ENCODE measurements at regions of chr16 and their contacts with region 1.

Region 1: GRCh38 chr16:648781-649589 is at the start of gene WDR90:
- DNase-seq: peak; percentile 84 to 88
- ATAC-seq: peak; percentile 85
- H3K4me3 ChIP-seq: peak within 1 kb of the TSS; percentile 61 to 78 (median 65)
- H3K27ac ChIP-seq: peak within 1 kb of the TSS; percentile 87 to 97 (median 96)
- H3K4me1 ChIP-seq: peaks cover 35 to 55% of the 10 kb centered on the region in 2 donors
- H3K27me3 ChIP-seq: no peaks in the 10 kb centered on the region
- CTCF ChIP-seq: no peak
- POLR2A ChIP-seq: peak; percentile 60 to 70
- total RNA-seq, gene WDR90: 2.9 to 9.8 (median 6.5) TPM

Region 2: GRCh38 chr16:234468-235305 is 414.3 kb before region 1 on chr16 and contains the start of gene FAM234A:
- in situ Hi-C with region 1: no loop called
- intact Hi-C with region 1: loop called (anchors 10 kb)
- DNase-seq: peak; percentile 92 to 93
- ATAC-seq: peak; percentile 86 to 87
- H3K4me3 ChIP-seq: peak within 1 kb of the TSS; percentile 89 to 98 (median 96)
- H3K27ac ChIP-seq: peak within 1 kb of the TSS; percentile 99 to 100 (median 100)
- H3K4me1 ChIP-seq: peaks cover 15 to 16% of the 10 kb centered on the region in 2 donors
- H3K27me3 ChIP-seq: no peaks in the 10 kb centered on the region
- CTCF ChIP-seq: peak in 4 of 5 experiments; percentile 37 to 51 (median 48)
- POLR2A ChIP-seq: peak; percentile 99 to 100
- total RNA-seq, gene FAM234A: 85.2 to 288 (median 251) TPM

Region 3: DNA sequence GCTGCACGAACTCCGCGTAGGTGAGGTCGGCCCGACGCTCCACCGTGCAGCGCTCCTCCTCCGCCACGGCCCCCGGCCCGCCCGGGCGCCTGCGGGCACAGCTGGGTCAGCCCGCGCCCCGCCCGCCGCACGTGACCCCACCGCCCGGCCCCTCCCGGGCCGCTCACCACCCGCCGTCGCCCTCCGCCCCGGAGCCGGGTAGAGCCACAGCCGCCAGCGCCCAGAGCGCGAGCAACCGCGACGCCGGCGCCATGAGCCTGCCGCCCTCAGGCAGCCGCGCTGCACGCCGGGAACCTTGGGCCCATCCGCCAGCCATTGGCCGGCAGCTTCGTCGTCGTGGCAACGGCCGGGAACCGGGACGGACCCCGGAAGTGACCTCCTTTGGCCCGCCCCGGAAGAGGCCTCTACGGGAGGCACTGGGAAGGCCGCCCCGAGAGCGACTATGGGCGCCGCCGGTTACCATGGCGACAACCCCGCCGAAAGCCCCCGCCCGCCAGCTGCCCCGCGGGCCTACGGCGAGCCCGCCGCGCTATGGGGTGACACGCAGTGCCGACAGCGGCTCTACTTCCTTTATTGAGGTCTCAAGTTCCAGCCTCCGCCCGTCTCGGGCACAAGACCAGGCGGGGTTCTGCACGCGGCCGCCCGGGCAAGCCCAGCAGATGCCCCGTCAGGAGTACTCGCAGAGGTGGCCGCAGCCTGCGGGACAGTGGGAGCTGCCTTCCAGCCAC is 35.2 kb after region 1 on chr16 and contains the start of gene JMJD8:
- in situ Hi-C with region 1: no loop called
- intact Hi-C with region 1: no loop called
- DNase-seq: peak; percentile 94
- ATAC-seq: peak; percentile 72 to 76
- H3K4me3 ChIP-seq: peak within 1 kb of the TSS; percentile 84 to 87 (median 86)
- H3K27ac ChIP-seq: peak within 1 kb of the TSS; percentile 73 to 87 (median 83)
- H3K4me1 ChIP-seq: peaks cover 35 to 57% of the 10 kb centered on the region in 2 donors
- H3K27me3 ChIP-seq: no peaks in the 10 kb centered on the region
- CTCF ChIP-seq: no peak
- POLR2A ChIP-seq: peak; percentile 53 to 60
- total RNA-seq, gene JMJD8: 22.8 to 81.8 (median 41.0) TPM

Region 4: GRCh38 chr16:695355-696089 is 46.5 kb after region 1 on chr16:
- in situ Hi-C with region 1: no loop called
- intact Hi-C with region 1: no loop called
- DNase-seq: no peak
- ATAC-seq: no peak
- H3K4me3 ChIP-seq: peak overlapping the region in 2 of 4 donors; percentile 25 to 34
- H3K27ac ChIP-seq: no peak overlapping the region
- H3K4me1 ChIP-seq: peaks cover 0 to 2% of the 10 kb centered on the region in 2 donors
- H3K27me3 ChIP-seq: peaks cover 63 to 75% (median 68%) of the 10 kb centered on the region in 3 donors
- CTCF ChIP-seq: no peak
- POLR2A ChIP-seq: no peak

Region 5: DNA sequence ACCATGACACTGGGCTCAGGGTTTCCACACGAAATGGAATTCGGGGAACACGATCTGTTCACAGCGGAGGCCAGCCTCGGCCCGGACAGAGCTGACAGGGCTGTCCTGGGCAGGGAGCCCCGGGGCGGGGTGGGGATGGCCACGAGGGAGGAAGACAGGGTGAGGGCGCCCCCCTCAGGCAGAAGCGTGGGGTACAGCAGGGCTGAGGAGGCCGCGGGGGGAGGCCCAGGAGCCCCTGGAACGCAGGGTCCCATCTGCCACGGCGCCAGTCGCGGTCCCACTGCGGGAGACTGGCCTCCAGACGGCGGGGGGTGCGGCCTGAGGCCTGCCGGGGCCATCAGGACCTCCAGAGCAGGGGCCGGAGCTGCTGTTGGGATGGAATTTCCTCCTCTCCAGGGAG is 245.9 kb after region 1 on chr16:
- in situ Hi-C with region 1: no loop called
- intact Hi-C with region 1: no loop called
- DNase-seq: no peak
- ATAC-seq: no peak
- H3K4me3 ChIP-seq: no peak overlapping the region
- H3K27ac ChIP-seq: no peak overlapping the region
- H3K4me1 ChIP-seq: no peaks in the 10 kb centered on the region
- H3K27me3 ChIP-seq: no peaks in the 10 kb centered on the region
- CTCF ChIP-seq: no peak
- POLR2A ChIP-seq: no peak